ENCODE measurements at regions of chr9 and their contacts with region 1.

Region 1: GRCh38 chr9:14353222-14354056 is 39.5 kb upstream of the NFIB start:
- DNase-seq: peak; percentile 84
- H3K4me3 ChIP-seq: no peak overlapping the region
- H3K27ac ChIP-seq: no peak overlapping the region
- H3K27me3 ChIP-seq: peaks cover 15% of the 10 kb centered on the region
- CTCF ChIP-seq: peak; percentile 97

Region 2: DNA sequence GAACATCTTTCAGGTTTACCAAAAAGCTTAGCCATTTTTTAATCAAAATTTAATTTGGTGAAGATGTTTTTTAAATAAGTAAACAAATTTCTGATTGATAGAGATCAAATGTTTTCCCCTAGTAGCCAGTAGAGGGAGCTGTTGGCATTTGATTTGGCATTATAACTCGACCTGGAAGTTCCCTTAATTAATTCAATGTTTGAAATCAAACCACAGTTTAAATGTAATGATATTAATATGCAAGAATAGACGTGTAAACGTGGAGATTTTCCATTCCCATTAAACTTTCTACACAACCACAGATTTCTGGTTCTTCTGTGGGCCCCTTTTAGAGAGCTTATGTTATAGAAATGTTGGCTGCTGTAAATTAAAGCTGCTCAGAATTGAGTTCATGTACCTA is 925.9 kb before region 1 on chr9:
- in situ Hi-C with region 1: loop called (anchors 25 kb)
- DNase-seq: peak; percentile 38
- H3K4me3 ChIP-seq: no peak overlapping the region
- H3K27ac ChIP-seq: no peak overlapping the region
- H3K27me3 ChIP-seq: no peaks in the 10 kb centered on the region
- CTCF ChIP-seq: peak; percentile 57

Region 3: DNA sequence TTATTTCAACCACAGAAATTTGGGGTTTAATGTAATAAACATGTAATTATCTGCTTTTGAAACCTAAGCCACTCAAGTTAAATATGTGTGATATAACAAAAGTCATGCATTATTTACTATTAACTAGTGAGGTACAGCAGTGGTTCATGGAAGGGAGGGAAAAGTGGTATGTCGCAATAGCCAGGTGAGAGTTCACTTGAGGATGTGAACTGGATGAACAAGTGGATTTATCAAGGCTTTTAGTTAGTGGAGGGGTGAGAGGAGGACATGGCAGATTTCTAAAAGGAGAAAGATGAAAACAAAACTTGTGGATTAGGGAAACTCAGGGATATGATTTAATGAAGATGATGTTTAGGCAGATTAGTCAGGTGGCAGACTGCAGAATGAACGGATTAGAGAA is 101.8 kb after region 1 on chr9:
- in situ Hi-C with region 1: no loop called
- DNase-seq: no peak
- H3K4me3 ChIP-seq: no peak overlapping the region
- H3K27ac ChIP-seq: no peak overlapping the region
- H3K27me3 ChIP-seq: no peaks in the 10 kb centered on the region
- CTCF ChIP-seq: no peak

Measured in brain microvascular endothelial cell (primary cell).